Activated B cell treated with CpG ODN at 0.5 μM for 24 hours (primary cell): ENCODE measurements at regions of chr16 and their contacts with region 1.

Region 1: DNA sequence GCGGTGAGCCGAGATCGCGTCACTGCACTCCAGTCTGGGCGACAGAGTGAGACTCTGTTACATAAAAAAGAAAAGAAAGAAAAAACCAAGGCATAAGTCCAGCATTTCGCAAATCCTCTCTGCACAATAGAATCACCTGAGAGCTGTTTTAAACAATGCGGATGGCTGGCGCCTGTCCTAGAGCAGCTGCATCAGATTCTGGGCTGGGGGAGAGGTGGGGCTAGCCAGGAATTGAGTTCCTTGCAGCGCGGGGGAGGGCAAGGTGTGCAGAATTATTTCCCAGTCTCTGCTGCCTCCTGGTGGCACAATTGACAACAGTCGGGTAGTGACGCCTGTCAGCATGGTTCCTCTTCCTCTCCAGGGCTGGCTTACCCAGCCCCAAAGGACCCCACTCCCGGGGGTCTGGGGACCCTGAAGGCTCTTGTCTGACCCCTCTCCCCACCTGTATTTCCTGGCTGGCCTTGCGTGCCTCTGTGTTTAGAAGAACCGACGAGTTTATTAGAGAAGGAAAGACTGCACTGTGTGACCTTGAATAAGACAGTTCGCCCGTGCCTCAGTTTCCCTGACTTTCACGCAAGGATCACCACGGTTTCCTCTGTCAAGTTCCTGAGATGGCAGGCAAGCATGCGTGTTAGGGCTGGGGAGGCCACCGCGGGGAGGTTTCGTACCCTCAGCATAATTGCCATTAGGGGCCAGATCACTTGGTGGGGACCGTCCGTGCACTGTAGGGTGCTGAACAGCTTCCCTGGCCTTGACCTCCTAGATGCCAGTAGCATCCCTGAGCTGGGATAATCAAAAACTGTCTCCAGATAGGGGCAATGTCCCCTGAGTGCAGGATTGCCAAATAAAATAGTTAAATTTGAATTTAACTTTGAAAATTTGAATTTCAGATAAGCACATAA is 41.0 kb upstream of the PLCG2 start:
- DNase-seq: peak; percentile 75
- ATAC-seq: peak; percentile 58
- H3K4me3 Mint-ChIP-seq: peak overlapping the region; percentile 79
- H3K27ac Mint-ChIP-seq: peak overlapping the region; percentile 95
- H3K4me1 Mint-ChIP-seq: peaks cover 53% of the 10 kb centered on the region
- H3K27me3 Mint-ChIP-seq: no peaks in the 10 kb centered on the region
- CTCF ChIP-seq: no peak

Region 2: GRCh38 chr16:80540516-80541272 is 1197.4 kb before region 1 on chr16 and contains the start of gene DYNLRB2:
- CTCF ChIA-PET with region 1: no interaction called
- POLR2A ChIA-PET with region 1: no interaction called
- intact Hi-C with region 1: loop called (anchors 10 kb)
- DNase-seq: peak; percentile 90
- ATAC-seq: peak; percentile 92
- H3K4me3 Mint-ChIP-seq: peak within 1 kb of the TSS; percentile 96
- H3K27ac Mint-ChIP-seq: peak within 1 kb of the TSS; percentile 96
- H3K4me1 Mint-ChIP-seq: peaks cover 16% of the 10 kb centered on the region
- H3K27me3 Mint-ChIP-seq: peaks cover 7% of the 10 kb centered on the region
- CTCF ChIP-seq: no peak
- total RNA-seq, gene DYNLRB2: 0.71 TPM in 1 of 2 replicates, not detected in the other

Region 3: GRCh38 chr16:81366316-81366932 is 371.7 kb before region 1 on chr16:
- CTCF ChIA-PET with region 1: interaction called, 21 read pairs
- POLR2A ChIA-PET with region 1: no interaction called
- intact Hi-C with region 1: loop called (anchors 1 kb)
- DNase-seq: no peak
- ATAC-seq: peak; percentile 82
- H3K4me3 Mint-ChIP-seq: no peak overlapping the region
- H3K27ac Mint-ChIP-seq: no peak overlapping the region
- H3K4me1 Mint-ChIP-seq: no peaks in the 10 kb centered on the region
- H3K27me3 Mint-ChIP-seq: no peaks in the 10 kb centered on the region
- CTCF ChIP-seq: no peak

Region 4: GRCh38 chr16:81623363-81624102 is 114.6 kb before region 1 on chr16:
- CTCF ChIA-PET with region 1: interaction called, 3 read pairs
- POLR2A ChIA-PET with region 1: no interaction called
- intact Hi-C with region 1: loop called (anchors 1 kb)
- DNase-seq: no peak
- ATAC-seq: peak; percentile 41
- H3K4me3 Mint-ChIP-seq: no peak overlapping the region
- H3K27ac Mint-ChIP-seq: no peak overlapping the region
- H3K4me1 Mint-ChIP-seq: peaks cover 17% of the 10 kb centered on the region
- H3K27me3 Mint-ChIP-seq: no peaks in the 10 kb centered on the region
- CTCF ChIP-seq: no peak

Region 5: GRCh38 chr16:81778861-81779535 is 40.9 kb after region 1 on chr16 and contains the start of gene PLCG2:
- CTCF ChIA-PET with region 1: interaction called, 3 read pairs
- POLR2A ChIA-PET with region 1: interaction called, 88 read pairs
- intact Hi-C with region 1: loop called (anchors 1 kb)
- DNase-seq: peak; percentile 92
- ATAC-seq: peak; percentile 83
- H3K4me3 Mint-ChIP-seq: peak within 1 kb of the TSS; percentile 97
- H3K27ac Mint-ChIP-seq: peak within 1 kb of the TSS; percentile 91
- H3K4me1 Mint-ChIP-seq: peaks cover 71% of the 10 kb centered on the region
- H3K27me3 Mint-ChIP-seq: no peaks in the 10 kb centered on the region
- CTCF ChIP-seq: no peak
- total RNA-seq, gene PLCG2: 449 and 525 TPM in 2 replicates

Region 6: DNA sequence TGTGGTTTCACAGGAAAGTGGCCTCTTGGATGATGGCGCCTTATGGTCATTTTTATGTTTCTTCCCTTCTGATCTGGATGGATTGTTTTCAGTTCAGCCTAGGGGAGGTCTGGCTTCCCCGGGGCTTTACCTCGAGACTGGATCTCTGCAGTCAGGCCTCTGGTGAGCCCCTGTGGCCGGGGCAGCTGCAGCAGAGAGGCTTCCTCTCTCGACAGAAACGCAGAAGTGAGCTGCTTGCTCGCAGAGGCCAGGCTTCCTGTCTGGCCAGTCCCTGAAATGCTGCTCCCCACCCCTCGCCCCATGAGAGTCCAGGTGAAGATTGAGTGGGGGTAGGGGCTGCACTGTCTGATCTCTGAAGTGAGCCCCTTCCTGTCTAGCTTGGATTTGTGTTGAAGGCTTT is 85.0 kb after region 1 on chr16:
- CTCF ChIA-PET with region 1: interaction called, 7 read pairs
- POLR2A ChIA-PET with region 1: interaction called, 57 read pairs
- intact Hi-C with region 1: loop called (anchors 1 kb)
- DNase-seq: peak; percentile 67
- ATAC-seq: peak; percentile 65
- H3K4me3 Mint-ChIP-seq: peak overlapping the region; percentile 80
- H3K27ac Mint-ChIP-seq: peak overlapping the region; percentile 97
- H3K4me1 Mint-ChIP-seq: peaks cover 99% of the 10 kb centered on the region
- H3K27me3 Mint-ChIP-seq: no peaks in the 10 kb centered on the region
- CTCF ChIP-seq: no peak